ENCODE measurements at regions of chr3 and their contacts with region 1.

Region 1: DNA sequence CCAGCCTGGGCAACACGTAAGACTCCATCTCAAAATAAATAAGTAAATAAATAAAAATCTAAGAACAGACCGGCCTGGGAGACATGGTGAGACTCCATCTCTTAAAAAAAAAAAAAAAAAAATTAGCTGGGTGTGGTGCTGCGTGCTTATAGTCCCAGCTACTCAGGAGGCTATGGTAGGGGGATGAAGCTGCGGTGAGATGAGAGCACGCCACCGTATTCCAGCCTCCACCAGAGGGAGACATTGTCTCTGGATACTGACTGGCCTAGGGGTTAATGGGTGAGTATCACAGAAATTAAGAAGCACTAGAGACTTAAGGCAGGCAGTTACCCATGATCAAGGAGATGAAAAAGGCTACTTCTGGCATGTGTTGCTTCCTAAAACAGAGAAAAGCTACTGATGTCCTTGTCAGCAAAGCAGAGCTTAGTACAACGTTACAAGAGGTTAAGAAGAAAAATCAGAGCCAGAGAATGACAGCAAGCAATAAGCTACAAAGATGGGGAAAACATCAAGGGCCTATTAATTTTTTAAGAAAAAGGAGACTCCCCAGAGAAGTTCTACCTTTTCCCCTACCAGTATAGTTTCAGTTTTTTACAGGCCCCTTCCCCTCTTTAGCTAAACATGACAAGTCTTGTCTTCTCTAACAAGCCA is 8.6 kb downstream of the TFRC start:
- DNase-seq: peak; percentile 50
- ATAC-seq: peak; percentile 94
- H3K4me3 ChIP-seq: no peak overlapping the region
- H3K27ac ChIP-seq: no peak overlapping the region
- H3K4me1 ChIP-seq: peaks cover 14% of the 10 kb centered on the region; the same call in 1 of the 2 replicates
- H3K27me3 ChIP-seq: no peaks in the 10 kb centered on the region
- CTCF ChIP-seq: peak; percentile 72 to 81 (median 76)
- EP300 ChIP-seq: no peak
- POLR2A ChIP-seq: no peak
- RAD21 ChIP-seq: peak; percentile 95

Region 2: GRCh38 chr3:195909644-195910508 is 163.4 kb before region 1 on chr3:
- CTCF ChIA-PET with region 1: interaction called, 11 read pairs
- POLR2A ChIA-PET with region 1: no interaction called
- RAD21 ChIA-PET with region 1: interaction called, 3 read pairs
- SMC1A ChIA-PET with region 1: no interaction called
- in situ Hi-C with region 1: no loop called
- intact Hi-C with region 1: no loop called
- DNase-seq: no peak
- ATAC-seq: peak; percentile 54
- H3K4me3 ChIP-seq: peak overlapping the region; percentile 74
- H3K27ac ChIP-seq: peak overlapping the region; percentile 28; the same call in 1 of the 2 replicates
- H3K4me1 ChIP-seq: peaks cover 13% of the 10 kb centered on the region
- H3K27me3 ChIP-seq: no peaks in the 10 kb centered on the region
- CTCF ChIP-seq: no peak
- EP300 ChIP-seq: no peak
- POLR2A ChIP-seq: peak; percentile 62
- RAD21 ChIP-seq: no peak

Region 3: DNA sequence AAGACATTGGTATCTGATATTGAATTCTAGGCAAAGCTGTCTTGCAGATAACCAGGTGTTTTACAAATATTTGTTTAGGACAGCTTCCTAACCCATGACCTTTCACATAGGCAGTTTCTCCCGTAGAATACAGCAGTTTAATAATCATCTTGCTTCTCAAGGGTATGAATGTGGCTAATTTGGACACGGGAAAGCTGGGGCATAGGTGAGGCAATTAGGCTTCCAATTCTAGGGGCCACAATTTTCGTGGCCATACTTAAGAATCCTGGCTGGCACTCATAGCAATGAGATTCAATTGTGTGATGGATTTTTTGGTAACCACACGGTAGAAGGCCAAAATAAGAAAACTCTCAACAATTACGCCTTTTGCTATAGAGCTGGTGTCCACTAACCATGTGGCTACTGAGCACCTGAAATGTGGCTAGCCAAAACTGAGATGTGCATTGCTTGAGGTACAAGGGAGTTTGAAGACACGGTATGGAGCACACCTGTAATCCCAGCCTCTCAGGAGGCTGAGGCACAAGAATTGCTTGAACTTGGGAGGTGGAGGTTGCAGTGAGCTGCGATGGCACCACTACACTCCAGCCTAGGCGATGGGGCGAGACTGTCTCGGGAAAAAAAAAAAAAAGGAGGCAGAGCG is 25.8 kb before region 1 on chr3:
- CTCF ChIA-PET with region 1: interaction called, 31 read pairs
- POLR2A ChIA-PET with region 1: interaction called, 4 read pairs
- RAD21 ChIA-PET with region 1: interaction called, 5 read pairs
- SMC1A ChIA-PET with region 1: interaction called, 10 read pairs
- in situ Hi-C with region 1: no loop called
- intact Hi-C with region 1: no loop called
- DNase-seq: no peak
- ATAC-seq: peak; percentile 17
- H3K4me3 ChIP-seq: no peak overlapping the region
- H3K27ac ChIP-seq: no peak overlapping the region
- H3K4me1 ChIP-seq: no peaks in the 10 kb centered on the region
- H3K27me3 ChIP-seq: no peaks in the 10 kb centered on the region
- CTCF ChIP-seq: no peak
- EP300 ChIP-seq: no peak
- POLR2A ChIP-seq: peak; percentile 64
- RAD21 ChIP-seq: no peak

Region 4: GRCh38 chr3:196115678-196116083 is 42.4 kb after region 1 on chr3:
- CTCF ChIA-PET with region 1: interaction called, 26 read pairs
- POLR2A ChIA-PET with region 1: interaction called, 26 read pairs
- RAD21 ChIA-PET with region 1: interaction called, 37 read pairs
- SMC1A ChIA-PET with region 1: interaction called, 95 read pairs
- in situ Hi-C with region 1: no loop called
- intact Hi-C with region 1: no loop called
- DNase-seq: peak; percentile 80
- ATAC-seq: peak; percentile 75
- H3K4me3 ChIP-seq: peak overlapping the region; percentile 37; the same call in 1 of the 2 replicates
- H3K27ac ChIP-seq: peak overlapping the region; percentile 86
- H3K4me1 ChIP-seq: peaks cover 69% of the 10 kb centered on the region
- H3K27me3 ChIP-seq: no peaks in the 10 kb centered on the region
- CTCF ChIP-seq: no peak
- EP300 ChIP-seq: peak; percentile 72 to 82; a peak in 3 of 4 replicates
- POLR2A ChIP-seq: no peak
- RAD21 ChIP-seq: 0 out of 2 replicates have a peak, but pooled peaks have one; percentile 19

Region 5: GRCh38 chr3:196179380-196180308 is 106.3 kb after region 1 on chr3:
- CTCF ChIA-PET with region 1: interaction called, 62 read pairs
- POLR2A ChIA-PET with region 1: interaction called, 42 read pairs
- RAD21 ChIA-PET with region 1: interaction called, 91 read pairs
- SMC1A ChIA-PET with region 1: interaction called, 155 read pairs
- in situ Hi-C with region 1: no loop called
- intact Hi-C with region 1: loop called (anchors 2 kb)
- DNase-seq: peak; percentile 98
- ATAC-seq: peak; percentile 81
- H3K4me3 ChIP-seq: peak overlapping the region; percentile 50; the same call in 1 of the 2 replicates
- H3K27ac ChIP-seq: peak overlapping the region; percentile 93
- H3K4me1 ChIP-seq: peaks cover 55% of the 10 kb centered on the region
- H3K27me3 ChIP-seq: no peaks in the 10 kb centered on the region
- CTCF ChIP-seq: peak; percentile 45 to 66 (median 48)
- EP300 ChIP-seq: peak; percentile 71 to 88
- POLR2A ChIP-seq: peak; percentile 75
- RAD21 ChIP-seq: peak; percentile 70

Region 6: GRCh38 chr3:196198771-196199753 is 125.7 kb after region 1 on chr3:
- CTCF ChIA-PET with region 1: interaction called, 157 read pairs
- POLR2A ChIA-PET with region 1: interaction called, 34 read pairs
- RAD21 ChIA-PET with region 1: interaction called, 113 read pairs
- SMC1A ChIA-PET with region 1: interaction called, 151 read pairs
- in situ Hi-C with region 1: loop called (anchors 5 kb)
- intact Hi-C with region 1: loop called (anchors 1 kb)
- DNase-seq: no peak
- ATAC-seq: no peak
- H3K4me3 ChIP-seq: no peak overlapping the region
- H3K27ac ChIP-seq: no peak overlapping the region
- H3K4me1 ChIP-seq: peaks cover 21% of the 10 kb centered on the region
- H3K27me3 ChIP-seq: no peaks in the 10 kb centered on the region
- CTCF ChIP-seq: peak in 2 of 3 experiments; percentile 18 to 25; a peak in 3 of 6 replicates
- EP300 ChIP-seq: no peak
- POLR2A ChIP-seq: no peak
- RAD21 ChIP-seq: peak; percentile 28; the same call in 1 of the 2 replicates

Measured in GM12878 (cell line).